Activated T-helper 2 cell treated with anti-CD3 and anti-CD28 coated beads, Interferon-gamma antibody, Interleukin-2, Interleukin-4, amounts not matched to agents 10 μg/mL and 5 μg/mL and 100 μg/mL, durations not matched to agents 14 hours and 24 hours and 36 hours (primary cell): ENCODE measurements at regions of chr5 and their contacts with region 1.

Region 1: GRCh38 chr5:35050541-35051126 is 2.9 kb upstream of the AGXT2 start:
- DNase-seq: no peak
- H3K4me3 Mint-ChIP-seq: no peak overlapping the region
- H3K27ac Mint-ChIP-seq: no peak overlapping the region
- H3K4me1 Mint-ChIP-seq: no peaks in the 10 kb centered on the region
- H3K27me3 Mint-ChIP-seq: peaks cover 6% of the 10 kb centered on the region

Region 2: DNA sequence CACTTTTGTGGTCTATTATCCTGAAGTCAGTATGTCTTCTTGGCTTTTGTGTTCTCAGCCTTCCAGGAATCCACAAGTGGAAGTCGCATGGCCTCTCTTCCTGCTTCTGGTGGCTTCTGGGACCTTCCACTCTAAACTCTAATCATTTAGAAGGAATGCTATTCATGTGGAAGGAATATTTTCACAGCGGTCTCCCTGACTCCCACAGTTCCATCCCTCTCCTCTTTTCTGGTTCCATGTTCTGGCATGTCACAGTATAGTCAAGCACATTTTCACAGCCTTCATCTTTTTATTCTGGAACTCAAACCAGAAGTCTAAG is 401.8 kb before region 1 on chr5:
- intact Hi-C with region 1: loop called (anchors 5 kb)
- DNase-seq: no peak
- H3K4me3 Mint-ChIP-seq: no peak overlapping the region
- H3K27ac Mint-ChIP-seq: no peak overlapping the region
- H3K4me1 Mint-ChIP-seq: no peaks in the 10 kb centered on the region
- H3K27me3 Mint-ChIP-seq: peaks cover 18% of the 10 kb centered on the region

Region 3: DNA sequence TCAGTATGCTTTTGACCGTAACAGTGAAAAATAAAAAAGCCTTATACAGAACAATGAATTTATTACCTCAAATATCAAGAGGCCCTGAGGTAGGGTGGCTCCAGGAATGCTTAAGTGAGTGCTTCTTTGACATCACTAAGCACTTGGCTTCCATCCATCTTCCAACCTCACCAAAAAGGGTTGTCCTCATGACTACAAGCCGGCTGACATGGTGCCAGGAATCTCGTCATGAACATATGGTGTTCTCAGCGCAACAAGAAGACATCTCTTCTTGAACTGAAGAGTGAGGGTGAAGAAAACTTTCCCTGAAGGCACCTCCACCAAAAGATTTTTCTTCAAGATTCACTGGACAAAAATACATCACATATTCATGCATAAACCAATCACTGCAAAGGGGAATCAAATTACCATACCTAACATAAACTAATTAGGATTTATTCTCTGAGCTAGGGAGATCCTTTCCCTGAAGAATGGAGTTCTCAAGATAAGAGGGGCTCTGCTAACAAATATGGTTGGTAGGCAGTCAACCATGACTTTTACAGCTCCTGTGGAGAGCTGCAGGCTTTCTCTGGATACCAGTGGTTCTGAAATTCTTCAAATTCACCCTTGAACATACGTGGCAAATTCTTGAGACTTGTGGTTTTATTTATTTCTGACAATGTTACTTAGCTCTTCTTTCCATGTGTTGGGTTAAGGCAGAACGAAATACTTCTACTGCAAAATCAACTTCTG is 52.4 kb before region 1 on chr5:
- intact Hi-C with region 1: no loop called
- DNase-seq: no peak
- H3K4me3 Mint-ChIP-seq: no peak overlapping the region
- H3K27ac Mint-ChIP-seq: no peak overlapping the region
- H3K4me1 Mint-ChIP-seq: no peaks in the 10 kb centered on the region
- H3K27me3 Mint-ChIP-seq: peaks cover 16% of the 10 kb centered on the region